ENCODE measurements at regions of chr2 and their contacts with region 1.

Region 1: DNA sequence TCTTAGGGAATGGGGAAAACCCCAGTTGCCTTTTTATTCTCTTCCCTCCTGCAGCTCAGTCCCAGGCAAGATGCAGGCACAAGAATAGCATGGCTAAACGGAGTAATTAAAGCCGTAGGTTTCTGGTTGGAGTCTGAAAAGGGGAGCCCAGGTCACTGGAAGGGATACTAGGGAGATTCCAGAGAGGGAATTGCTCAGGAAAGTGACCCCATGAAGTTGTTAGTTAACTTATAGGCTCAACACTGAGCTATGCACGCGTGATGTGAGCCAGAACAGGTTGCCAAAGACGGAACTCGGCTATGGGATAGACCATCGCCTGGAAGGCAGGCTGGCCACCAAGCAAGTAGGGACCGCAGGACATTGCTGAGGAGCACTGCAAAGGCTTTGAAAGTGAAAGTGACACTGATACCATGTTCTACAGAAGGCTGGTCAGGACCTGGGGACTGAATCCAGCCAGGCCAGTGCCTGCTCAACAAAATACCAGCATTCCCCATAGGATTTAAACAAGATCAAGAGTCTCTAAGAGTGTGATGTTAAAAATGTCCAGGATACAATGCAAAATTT is 7.3 kb downstream of the FARP2 start:
- DNase-seq: no peak
- H3K4me3 ChIP-seq: no peak overlapping the region
- CTCF ChIP-seq: no peak

Region 2: DNA sequence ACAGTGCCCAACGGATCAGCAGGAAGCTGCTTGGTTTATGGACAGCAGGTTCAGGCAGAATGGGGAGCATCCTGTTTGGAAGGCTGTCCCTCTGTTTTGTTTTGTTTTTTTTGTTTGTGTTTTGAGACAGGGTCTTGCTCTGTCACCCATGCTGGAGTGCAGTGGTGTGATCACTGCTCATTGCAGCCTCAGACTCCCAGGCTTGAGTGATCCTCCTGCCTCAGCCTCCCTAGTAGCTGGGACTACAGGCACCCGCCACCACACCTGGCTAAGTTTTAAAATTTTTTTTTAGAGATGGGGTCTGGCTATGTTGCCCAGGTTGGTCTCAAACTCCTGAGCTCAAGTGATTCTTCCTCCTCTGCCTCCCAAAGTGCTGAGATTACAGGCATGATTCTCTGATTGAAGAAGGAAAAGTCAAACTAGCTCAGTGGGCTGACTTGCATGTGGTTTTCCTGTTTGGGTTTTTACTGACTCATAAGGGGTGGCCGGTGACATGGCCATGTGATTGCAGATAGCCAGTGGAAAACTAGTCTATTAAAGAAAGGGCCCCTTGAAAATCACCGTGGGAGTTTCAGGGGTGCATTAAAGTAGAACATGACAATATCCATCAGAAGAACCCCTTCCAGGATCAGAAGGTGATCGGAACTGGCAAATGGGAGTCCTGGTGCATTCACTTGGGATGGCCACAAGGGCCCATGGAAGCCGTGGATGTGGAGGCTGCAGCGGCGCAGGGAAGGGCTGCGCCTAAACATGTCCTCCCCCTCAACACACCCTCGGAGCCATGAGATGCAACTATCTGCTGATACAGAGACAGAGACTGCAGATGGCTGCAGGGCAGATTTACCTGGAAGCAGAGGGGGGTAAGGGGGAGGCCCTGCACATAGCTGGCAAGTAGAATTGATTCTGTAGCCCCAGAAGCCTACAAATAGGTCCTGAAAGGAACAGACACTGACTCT is 707.2 kb before region 1 on chr2:
- in situ Hi-C with region 1: no loop called
- DNase-seq: no peak
- H3K4me3 ChIP-seq: no peak overlapping the region
- CTCF ChIP-seq: no peak

Region 3: DNA sequence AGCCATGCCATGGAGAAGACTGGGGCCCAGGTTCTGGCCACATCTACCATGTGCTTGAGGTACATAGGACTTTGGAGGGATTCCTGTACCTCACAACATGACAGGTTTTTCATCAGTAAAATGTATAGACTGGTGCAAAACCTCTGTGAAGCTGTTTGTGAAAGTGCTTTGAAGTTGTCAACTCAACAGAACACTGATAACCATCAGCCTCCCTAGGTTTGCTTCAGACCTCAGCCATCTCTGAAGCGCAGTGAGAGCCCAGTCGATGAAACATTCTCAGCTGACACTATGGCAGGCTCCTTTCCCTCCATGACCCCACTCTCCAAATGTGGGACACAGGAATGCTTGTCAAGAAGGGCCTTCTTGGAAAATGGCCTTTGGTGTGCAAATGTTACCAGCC is 106.3 kb after region 1 on chr2:
- in situ Hi-C with region 1: loop called (anchors 10 kb)
- DNase-seq: no peak
- H3K4me3 ChIP-seq: no peak overlapping the region
- CTCF ChIP-seq: no peak

Measured in astrocyte of the cerebellum (primary cell).